ENCODE measurements at regions of chr17 and their contacts with region 1.

Region 1: DNA sequence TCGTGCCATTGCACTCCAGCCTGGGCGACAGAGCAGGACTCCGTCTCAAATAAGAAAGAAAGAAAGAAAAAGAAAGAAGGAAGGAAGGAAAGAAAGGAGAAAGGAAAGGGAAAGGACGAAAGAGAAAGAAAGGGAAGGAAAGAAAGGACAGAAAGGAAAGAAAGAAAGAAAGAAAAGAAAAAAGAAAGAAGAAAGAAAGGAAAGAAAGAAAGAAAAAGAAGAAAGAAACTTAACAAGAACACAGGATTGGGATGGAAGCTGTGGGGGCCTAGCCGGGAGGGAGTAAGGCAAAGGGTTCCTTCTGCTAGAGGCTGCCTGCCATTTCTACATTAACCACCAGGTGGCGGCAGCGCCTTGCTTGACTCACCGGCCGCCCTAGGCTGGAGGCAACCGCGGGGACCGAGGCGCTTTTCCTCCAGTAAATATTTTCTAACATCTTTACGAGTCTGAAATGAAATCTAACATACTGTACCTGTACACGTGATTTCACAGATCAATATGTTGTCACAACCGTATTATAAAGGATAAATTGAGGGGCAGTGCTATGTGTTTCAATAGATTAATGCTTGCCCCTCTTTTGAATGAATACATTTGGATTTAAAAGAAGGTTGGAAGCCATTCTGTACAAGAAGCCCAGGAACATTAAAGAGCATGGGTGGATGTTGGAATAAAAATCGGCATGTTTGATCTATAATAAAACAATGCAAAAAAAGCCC is 6.1 kb downstream of the GJD3 start:
- DNase-seq: peak; percentile 77 to 97 (median 93)

Region 2: GRCh38 chr17:40303009-40303657 is 55.3 kb before region 1 on chr17:
- intact Hi-C with region 1: loop called (anchors 2 kb)
- DNase-seq: peak in 21 of 42 donors; percentile 41 to 86 (median 63)

Region 3: DNA sequence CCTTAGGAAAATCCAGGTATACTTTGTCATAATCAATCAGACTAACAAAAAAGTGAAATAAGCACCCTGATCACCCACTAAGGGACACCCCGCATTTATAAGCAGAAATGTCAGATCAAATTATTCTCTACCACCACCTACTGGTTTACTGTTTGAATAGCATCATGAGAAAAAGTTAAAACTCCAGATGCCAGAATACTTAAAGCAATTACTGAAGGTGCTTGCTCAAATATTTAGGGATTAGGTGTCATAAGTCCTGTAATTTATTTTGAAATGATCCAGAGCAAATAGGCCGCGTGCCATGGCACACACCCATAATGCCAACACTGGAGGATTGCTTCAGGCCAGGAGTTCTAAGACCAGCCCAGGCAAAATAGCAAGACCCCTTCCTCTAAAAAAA is 56.9 kb after region 1 on chr17:
- intact Hi-C with region 1: no loop called
- DNase-seq: no peak

Region 4: DNA sequence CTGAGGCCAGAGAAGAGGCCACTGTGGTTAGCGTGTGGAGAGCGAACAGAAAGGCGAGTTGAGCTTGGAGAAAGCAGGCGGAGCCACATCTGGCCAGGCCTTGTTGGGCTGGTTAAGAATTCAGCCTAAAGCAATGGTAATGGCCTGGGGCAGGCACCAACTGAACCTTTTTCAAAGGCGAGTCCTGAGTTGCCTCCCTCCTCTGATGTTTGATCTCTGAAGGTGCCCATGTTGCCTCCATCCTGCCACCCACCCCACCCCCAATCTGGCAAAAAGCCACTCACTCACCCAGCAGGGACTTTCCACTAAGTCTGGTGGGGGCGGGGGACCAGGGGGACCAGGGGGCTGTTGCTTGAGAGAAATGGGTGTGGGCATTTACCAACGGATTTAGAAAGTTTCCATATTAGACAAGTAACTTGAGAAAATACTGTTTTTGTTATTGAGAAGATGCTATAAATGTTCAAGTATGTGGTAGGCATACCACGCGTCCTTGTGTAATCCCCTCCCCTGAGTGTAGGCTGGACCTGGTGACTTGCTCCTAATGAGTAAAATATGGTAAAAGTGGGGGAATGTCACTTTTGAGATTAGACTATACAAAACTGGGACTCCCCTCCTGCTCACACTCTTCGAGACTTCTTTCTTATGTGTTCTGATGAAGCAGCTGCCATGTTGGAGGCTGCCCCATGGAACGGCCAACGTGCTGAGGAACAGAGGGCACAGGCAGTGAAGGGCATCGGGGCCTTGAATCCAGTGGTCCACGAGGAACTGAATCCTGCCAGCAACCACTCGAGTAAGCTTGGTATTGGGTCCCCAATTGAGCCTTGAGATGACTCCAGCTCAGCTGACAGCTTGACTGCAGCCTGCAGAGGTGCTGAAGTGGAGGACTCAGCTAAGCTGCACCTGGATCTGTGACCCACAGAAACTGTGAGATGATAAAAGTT is 172.8 kb after region 1 on chr17:
- intact Hi-C with region 1: loop called (anchors 5 kb)
- DNase-seq: peak in 2 of 42 donors; percentile 10 to 27

Region 5: DNA sequence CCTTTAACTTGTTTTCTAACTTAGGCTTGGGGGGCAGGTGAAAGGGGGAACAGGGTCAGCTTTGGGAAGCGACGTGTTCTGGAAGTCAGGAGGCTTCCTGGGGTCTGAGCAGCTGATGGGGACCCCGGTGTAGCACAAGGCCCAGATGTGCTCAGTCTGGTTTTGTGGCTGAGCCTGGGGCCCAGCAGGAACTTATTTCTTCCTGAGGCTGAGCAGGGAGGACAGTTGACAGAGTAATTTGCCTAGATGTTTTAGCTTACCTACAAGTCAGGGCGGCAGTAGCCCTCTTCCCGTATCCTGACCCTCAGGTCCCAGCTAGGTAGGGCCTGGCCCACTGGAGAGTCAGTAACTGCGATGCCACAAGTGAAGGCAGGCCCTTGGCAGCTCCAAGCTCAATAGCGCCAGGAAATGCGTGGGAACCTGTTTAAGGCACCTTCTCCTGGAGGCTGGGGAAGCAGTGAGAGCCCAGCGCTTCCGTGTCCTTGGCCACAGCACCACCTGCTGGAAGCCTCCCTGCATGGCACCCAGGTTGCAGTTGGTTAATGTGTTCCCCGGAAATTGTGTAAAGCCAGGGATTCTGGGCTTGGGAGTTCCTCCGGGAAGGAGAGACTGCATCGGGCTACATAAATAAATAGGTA is 201.6 kb after region 1 on chr17:
- intact Hi-C with region 1: loop called (anchors 2 kb)
- DNase-seq: peak; percentile 76 to 96 (median 90)